Transverse colon (tissue), 4 donors: ENCODE measurements at regions of chr11 and their contacts with region 1.

Region 1: DNA sequence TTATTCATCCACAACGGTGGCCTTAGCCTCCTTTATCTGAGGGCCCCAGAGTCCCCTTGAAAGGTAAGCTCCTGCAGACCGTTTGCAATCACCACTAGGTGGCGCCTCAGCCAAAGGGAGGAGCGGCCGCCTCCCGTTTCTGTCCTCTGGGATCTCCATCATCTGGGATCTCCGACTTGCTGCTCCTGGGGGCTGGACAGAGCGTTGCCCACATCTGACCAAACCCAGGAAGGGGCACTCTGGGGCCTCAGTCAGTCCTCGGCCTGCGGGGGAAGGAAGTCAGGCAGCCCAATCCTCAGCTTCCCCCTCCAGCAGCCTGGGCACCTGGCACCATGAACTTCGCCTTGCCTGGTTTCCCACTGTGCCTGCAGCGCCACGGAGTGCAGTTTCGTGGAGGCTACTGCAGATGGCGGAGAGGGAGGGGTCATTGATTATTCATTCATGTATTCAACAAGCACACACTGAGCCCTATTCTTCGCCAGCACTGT is 23.5 kb downstream of the TP53I11 start:
- DNase-seq: peak; percentile 74
- H3K4me3 ChIP-seq: no peak overlapping the region
- H3K27ac ChIP-seq: no peak overlapping the region
- H3K4me1 ChIP-seq: no peaks in the 10 kb centered on the region
- H3K27me3 ChIP-seq: no peaks in the 10 kb centered on the region
- CTCF ChIP-seq: peak; percentile 80 to 92 (median 89)
- EP300 ChIP-seq: no peak
- POLR2A ChIP-seq: no peak

Region 2: DNA sequence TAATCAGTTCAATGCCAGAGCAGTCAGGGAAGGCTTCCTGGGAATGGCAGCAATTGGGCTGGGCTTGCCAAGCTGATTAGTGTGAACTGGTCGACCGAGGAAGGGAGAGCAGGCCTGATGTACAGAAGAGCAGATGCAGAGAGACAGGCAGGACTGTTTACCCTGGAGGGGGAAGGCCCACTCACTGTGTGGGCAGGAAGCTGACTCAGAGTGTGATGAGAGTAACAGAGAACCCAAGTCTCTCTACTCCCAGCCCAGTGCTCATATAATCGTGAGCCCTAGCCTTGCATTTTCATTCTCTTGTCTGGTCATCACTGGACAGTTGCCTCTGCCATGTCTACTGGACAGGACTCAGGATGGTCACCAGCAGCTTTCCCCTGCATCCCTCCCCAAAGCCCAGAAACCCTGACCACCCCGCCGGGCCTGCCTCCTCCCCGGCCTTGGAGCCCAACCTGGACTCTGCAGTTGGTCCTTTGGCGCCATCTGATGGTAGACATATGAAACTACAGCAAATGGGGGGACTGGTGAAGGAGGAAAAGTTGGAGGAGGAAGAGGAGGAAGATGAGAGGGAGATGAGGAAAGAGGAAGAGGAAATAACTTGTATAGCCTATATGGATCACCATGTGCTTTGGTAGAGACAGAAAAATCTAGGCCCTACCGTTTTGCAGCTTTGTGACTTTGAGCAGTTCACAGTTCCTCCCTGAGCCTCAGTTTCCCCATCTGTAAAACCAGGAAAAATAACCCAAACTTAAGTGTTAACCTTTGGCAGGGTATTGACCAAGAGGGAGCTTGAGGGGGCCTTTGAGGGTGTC is 175.8 kb after region 1 on chr11:
- in situ Hi-C with region 1: loop called in 1 of 4 experiments (anchors 5 kb)
- intact Hi-C with region 1: no loop called
- DNase-seq: peak; percentile 51
- H3K4me3 ChIP-seq: peak overlapping the region in 1 of 4 donors; percentile 5
- H3K27ac ChIP-seq: no peak overlapping the region
- H3K4me1 ChIP-seq: peaks cover 0 to 12% (median 0%) of the 10 kb centered on the region in 4 donors
- H3K27me3 ChIP-seq: peaks cover 13% of the 10 kb centered on the region
- CTCF ChIP-seq: peak; percentile 93 to 98 (median 96)
- EP300 ChIP-seq: no peak
- POLR2A ChIP-seq: no peak